Activated naive CD8-positive, alpha-beta T cell treated with anti-CD3 and anti-CD28 coated beads, Interleukin-2, amount 10 ng/mL, durations not matched to agents 7 days and 5 days (primary cell): ENCODE measurements at regions of chr5 and their contacts with region 1.

Region 1: DNA sequence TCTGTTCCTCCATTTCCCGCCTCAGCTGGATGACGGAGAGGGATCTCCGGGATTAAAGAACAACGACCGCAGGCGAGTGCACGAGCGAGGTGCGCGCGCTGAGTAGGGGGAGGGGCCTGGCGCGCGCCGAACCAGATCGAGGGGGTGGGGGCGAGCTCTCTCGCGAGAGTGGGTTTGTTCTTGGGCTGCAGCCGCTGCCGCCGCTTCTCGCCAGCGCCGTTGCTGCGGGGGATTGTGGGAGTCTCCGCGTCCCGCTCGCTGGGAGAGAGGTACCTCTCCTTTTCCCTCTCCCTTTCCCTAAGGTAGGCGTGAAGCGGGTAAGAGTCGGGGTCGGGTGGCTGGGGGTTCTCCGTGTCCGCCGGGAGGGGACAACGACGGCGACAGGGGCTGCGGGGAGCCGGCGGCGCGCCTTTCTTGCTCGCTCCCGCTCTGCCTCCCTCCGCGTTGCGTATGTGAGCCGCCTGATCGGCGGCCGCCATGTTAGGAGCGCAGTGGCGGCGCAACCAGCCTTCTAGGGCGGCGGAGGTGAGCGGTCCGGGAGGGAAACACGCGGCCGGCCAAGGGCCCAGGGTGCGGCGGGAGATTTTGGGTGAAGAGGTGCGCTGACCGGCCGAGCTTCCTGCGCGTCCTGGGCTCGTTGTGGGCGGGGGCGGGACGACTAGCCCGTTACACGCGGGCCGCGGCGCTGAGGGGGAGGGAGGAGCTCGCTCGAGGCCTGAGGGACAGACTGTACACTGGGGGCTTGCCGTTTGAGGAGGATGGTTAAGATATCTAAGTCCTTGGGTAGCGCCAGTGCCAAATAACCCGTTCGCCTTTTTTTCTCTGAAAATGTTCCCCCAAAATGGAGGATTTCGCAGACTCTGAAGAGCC is at the start of gene MATR3:
- DNase-seq: peak; percentile 92
- ATAC-seq: peak; percentile 85
- H3K4me3 Mint-ChIP-seq: peak within 1 kb of the TSS; percentile 94
- H3K27ac Mint-ChIP-seq: peak within 1 kb of the TSS; percentile 96
- H3K4me1 Mint-ChIP-seq: peaks cover 32% of the 10 kb centered on the region
- H3K27me3 Mint-ChIP-seq: no peaks in the 10 kb centered on the region
- total RNA-seq, gene MATR3: 174 to 183 TPM

Region 2: GRCh38 chr5:139157552-139157951 is 136.2 kb before region 1 on chr5:
- POLR2A ChIA-PET with region 1: no interaction called
- DNase-seq: no peak
- ATAC-seq: no peak
- H3K4me3 Mint-ChIP-seq: no peak overlapping the region
- H3K27ac Mint-ChIP-seq: no peak overlapping the region
- H3K4me1 Mint-ChIP-seq: peaks cover 7% of the 10 kb centered on the region
- H3K27me3 Mint-ChIP-seq: no peaks in the 10 kb centered on the region

Region 3: DNA sequence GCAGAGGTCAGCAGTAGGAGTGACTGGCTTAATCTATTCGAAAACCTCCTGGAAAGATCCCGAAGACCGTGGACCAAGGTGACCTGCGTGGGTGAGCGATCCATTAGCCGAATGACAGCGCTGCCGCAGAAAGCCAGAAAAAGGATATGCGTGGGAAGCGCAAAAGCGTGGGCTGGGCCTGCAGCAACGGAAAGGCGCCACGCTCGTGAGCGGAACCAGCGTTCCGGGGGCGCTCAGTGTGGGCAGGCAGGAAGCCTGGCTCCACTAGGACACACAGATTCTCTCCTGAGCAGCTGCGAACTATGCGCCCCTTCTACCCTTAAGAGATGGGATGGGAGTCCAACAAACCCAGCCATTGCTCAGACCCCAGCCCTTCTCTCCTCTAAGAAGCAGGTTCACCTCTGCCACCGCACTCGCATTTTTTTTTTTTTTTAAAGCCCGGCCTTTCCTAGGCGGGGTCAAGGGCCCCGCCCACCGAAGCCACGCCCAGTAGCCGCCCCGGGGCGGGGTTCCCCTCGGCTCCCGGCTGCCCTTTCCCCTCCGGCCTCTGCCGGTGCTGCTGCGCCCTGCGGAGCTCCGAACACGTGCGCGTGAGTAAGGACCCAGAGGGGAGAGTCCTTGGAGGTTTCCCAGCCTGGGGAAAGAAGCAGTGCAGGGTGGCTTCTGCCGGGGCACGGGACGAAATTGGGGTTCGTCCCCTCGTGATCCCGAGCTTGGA is 20.0 kb before region 1 on chr5:
- POLR2A ChIA-PET with region 1: interaction called, 52 read pairs
- DNase-seq: peak; percentile 94
- ATAC-seq: peak; percentile 90
- H3K4me3 Mint-ChIP-seq: peak overlapping the region; percentile 89
- H3K27ac Mint-ChIP-seq: peak overlapping the region; percentile 72
- H3K4me1 Mint-ChIP-seq: peaks cover 51% of the 10 kb centered on the region
- H3K27me3 Mint-ChIP-seq: no peaks in the 10 kb centered on the region

Region 4: GRCh38 chr5:139306197-139306596 is 12.5 kb after region 1 on chr5:
- POLR2A ChIA-PET with region 1: interaction called, 23 read pairs
- DNase-seq: no peak
- ATAC-seq: peak; percentile 35
- H3K4me3 Mint-ChIP-seq: peak overlapping the region; percentile 1
- H3K27ac Mint-ChIP-seq: peak overlapping the region; percentile 39
- H3K4me1 Mint-ChIP-seq: peaks cover 51% of the 10 kb centered on the region
- H3K27me3 Mint-ChIP-seq: no peaks in the 10 kb centered on the region

Region 5: GRCh38 chr5:139341650-139342422 is 48.1 kb after region 1 on chr5 and contains the start of gene PAIP2:
- POLR2A ChIA-PET with region 1: interaction called, 33 read pairs
- DNase-seq: peak; percentile 97
- ATAC-seq: peak; percentile 88
- H3K4me3 Mint-ChIP-seq: peak within 1 kb of the TSS; percentile 100
- H3K27ac Mint-ChIP-seq: peak within 1 kb of the TSS; percentile 100
- H3K4me1 Mint-ChIP-seq: peaks cover 29% of the 10 kb centered on the region
- H3K27me3 Mint-ChIP-seq: no peaks in the 10 kb centered on the region
- total RNA-seq, gene PAIP2: 108 to 118 TPM

Region 6: GRCh38 chr5:139392678-139393496 is 99.1 kb after region 1 on chr5:
- POLR2A ChIA-PET with region 1: interaction called, 30 read pairs
- DNase-seq: peak; percentile 94
- ATAC-seq: peak; percentile 67
- H3K4me3 Mint-ChIP-seq: peak overlapping the region; percentile 96
- H3K27ac Mint-ChIP-seq: peak overlapping the region; percentile 95
- H3K4me1 Mint-ChIP-seq: peaks cover 52% of the 10 kb centered on the region
- H3K27me3 Mint-ChIP-seq: no peaks in the 10 kb centered on the region